Psoas muscle (tissue), 8 donors: ENCODE measurements at regions of chr7 and their contacts with region 1.

Region 1: GRCh38 chr7:157273208-157274093 is 63.4 kb upstream of the DNAJB6 start:
- DNase-seq: peak; percentile 71 to 84
- ATAC-seq: peak; percentile 82 to 88 (median 86)
- H3K4me3 ChIP-seq: no peak overlapping the region
- H3K27ac ChIP-seq: peak overlapping the region; percentile 42
- H3K4me1 ChIP-seq: peaks cover 11% of the 10 kb centered on the region
- H3K27me3 ChIP-seq: peaks cover 0 to 6% (median 0%) of the 10 kb centered on the region in 3 donors
- CTCF ChIP-seq: peak; percentile 97

Region 2: GRCh38 chr7:157238087-157238486 is 35.4 kb before region 1 on chr7:
- intact Hi-C with region 1: no loop called
- DNase-seq: no peak
- ATAC-seq: peak in 1 of 4 donors; percentile 62
- H3K4me3 ChIP-seq: no peak overlapping the region
- H3K27ac ChIP-seq: no peak overlapping the region
- H3K4me1 ChIP-seq: no peaks in the 10 kb centered on the region
- H3K27me3 ChIP-seq: no peaks in the 10 kb centered on the region
- CTCF ChIP-seq: no peak

Region 3: GRCh38 chr7:157336383-157337315 is 63.2 kb after region 1 on chr7 and contains the start of gene DNAJB6:
- intact Hi-C with region 1: loop called in 1 of 2 experiments (anchors 10 kb)
- DNase-seq: peak; percentile 93 to 97
- ATAC-seq: peak; percentile 84 to 92 (median 87)
- H3K4me3 ChIP-seq: peak within 1 kb of the TSS; percentile 71
- H3K27ac ChIP-seq: peak within 1 kb of the TSS; percentile 94
- H3K4me1 ChIP-seq: peaks cover 27% of the 10 kb centered on the region
- H3K27me3 ChIP-seq: no peaks in the 10 kb centered on the region
- CTCF ChIP-seq: no peak
- total RNA-seq, gene DNAJB6: 226 to 243 (median 232) TPM

Region 4: GRCh38 chr7:157404845-157405481 is 131.5 kb after region 1 on chr7:
- intact Hi-C with region 1: loop called in 1 of 2 experiments (anchors 10 kb)
- DNase-seq: peak in 1 of 2 donors; percentile 57
- ATAC-seq: peak; percentile 4 to 56 (median 54)
- H3K4me3 ChIP-seq: no peak overlapping the region
- H3K27ac ChIP-seq: peak overlapping the region; percentile 73
- H3K4me1 ChIP-seq: peaks cover 21% of the 10 kb centered on the region
- H3K27me3 ChIP-seq: no peaks in the 10 kb centered on the region
- CTCF ChIP-seq: no peak